ENCODE measurements at regions of chr6 and their contacts with region 1.

Region 1: DNA sequence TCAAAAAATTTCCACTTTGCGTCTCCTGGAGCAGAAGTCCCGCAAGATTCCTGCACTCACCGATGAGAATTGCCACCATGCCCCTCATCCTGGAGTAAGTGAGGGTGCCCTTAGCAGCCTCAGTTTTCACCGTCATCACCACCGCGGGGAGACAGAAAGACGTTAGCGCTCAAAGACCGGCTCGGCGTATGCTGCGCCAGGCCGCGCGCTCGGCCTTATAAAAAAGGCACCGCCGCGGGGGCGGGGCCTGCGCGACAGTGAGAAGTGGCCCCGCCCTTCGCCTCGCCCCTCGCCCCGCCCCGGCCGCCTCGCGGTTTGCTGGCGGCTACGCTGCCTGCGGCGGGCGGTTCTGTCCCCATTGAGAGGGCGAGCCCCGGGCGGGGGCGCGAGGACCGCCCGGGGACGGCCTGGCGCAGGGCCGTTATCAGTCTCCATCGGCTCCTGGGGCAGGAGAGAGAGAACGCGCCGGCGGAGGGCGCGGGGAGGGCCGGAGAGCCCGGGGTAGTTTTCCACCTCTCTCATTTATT is 122.3 kb upstream of the SLC2A12 start:
- DNase-seq: peak; percentile 88 to 97 (median 94)
- ATAC-seq: peak; percentile 77
- H3K4me3 ChIP-seq: peak overlapping the region; percentile 64 to 87
- H3K4me3 Mint-ChIP-seq: peak overlapping the region; percentile 98
- H3K27ac ChIP-seq: peak overlapping the region; percentile 67 to 79
- H3K27ac Mint-ChIP-seq: peak overlapping the region; percentile 94
- H3K4me1 ChIP-seq: peaks cover 63% of the 10 kb centered on the region
- H3K4me1 Mint-ChIP-seq: peaks cover 71% of the 10 kb centered on the region
- H3K27me3 ChIP-seq: no peaks in the 10 kb centered on the region
- H3K27me3 Mint-ChIP-seq: no peaks in the 10 kb centered on the region
- CTCF ChIP-seq: no peak

Region 2: DNA sequence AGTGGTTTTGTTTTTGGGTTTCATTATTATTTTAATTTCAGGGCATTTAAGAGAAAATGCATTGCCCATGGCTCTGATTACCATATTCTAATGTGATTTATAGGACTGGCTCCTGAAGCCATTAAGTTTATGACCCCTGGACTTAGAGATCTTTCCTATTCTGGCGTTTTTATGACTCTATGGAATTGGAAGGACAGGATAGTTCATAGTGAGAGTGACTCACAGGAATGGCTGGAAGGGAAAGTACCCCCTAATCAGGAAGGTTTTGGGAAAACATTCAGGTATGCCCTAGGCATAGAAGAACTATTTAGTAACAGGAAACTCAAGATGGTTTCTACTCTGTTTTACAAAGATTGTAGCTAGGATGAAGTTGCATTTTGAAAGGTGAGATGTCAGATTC is 13.7 kb before region 1 on chr6:
- CTCF ChIA-PET with region 1: interaction called, 11 read pairs
- POLR2A ChIA-PET with region 1: interaction called, 3 read pairs
- intact Hi-C with region 1: no loop called
- DNase-seq: no peak
- ATAC-seq: no peak
- H3K4me3 ChIP-seq: no peak overlapping the region
- H3K4me3 Mint-ChIP-seq: no peak overlapping the region
- H3K27ac ChIP-seq: no peak overlapping the region
- H3K27ac Mint-ChIP-seq: no peak overlapping the region
- H3K4me1 ChIP-seq: no peaks in the 10 kb centered on the region
- H3K4me1 Mint-ChIP-seq: no peaks in the 10 kb centered on the region
- H3K27me3 ChIP-seq: no peaks in the 10 kb centered on the region
- H3K27me3 Mint-ChIP-seq: no peaks in the 10 kb centered on the region
- CTCF ChIP-seq: no peak

Region 3: GRCh38 chr6:134381959-134382358 is 207.2 kb after region 1 on chr6:
- CTCF ChIA-PET with region 1: interaction called, 5 read pairs
- POLR2A ChIA-PET with region 1: no interaction called
- intact Hi-C with region 1: loop called in 1 of 2 experiments (anchors 10 kb)
- DNase-seq: no peak
- ATAC-seq: no peak
- H3K4me3 ChIP-seq: no peak overlapping the region
- H3K4me3 Mint-ChIP-seq: no peak overlapping the region
- H3K27ac ChIP-seq: no peak overlapping the region
- H3K27ac Mint-ChIP-seq: no peak overlapping the region
- H3K4me1 ChIP-seq: peaks cover 19% of the 10 kb centered on the region
- H3K4me1 Mint-ChIP-seq: peaks cover 25% of the 10 kb centered on the region
- H3K27me3 ChIP-seq: no peaks in the 10 kb centered on the region
- H3K27me3 Mint-ChIP-seq: no peaks in the 10 kb centered on the region
- CTCF ChIP-seq: no peak

Region 4: DNA sequence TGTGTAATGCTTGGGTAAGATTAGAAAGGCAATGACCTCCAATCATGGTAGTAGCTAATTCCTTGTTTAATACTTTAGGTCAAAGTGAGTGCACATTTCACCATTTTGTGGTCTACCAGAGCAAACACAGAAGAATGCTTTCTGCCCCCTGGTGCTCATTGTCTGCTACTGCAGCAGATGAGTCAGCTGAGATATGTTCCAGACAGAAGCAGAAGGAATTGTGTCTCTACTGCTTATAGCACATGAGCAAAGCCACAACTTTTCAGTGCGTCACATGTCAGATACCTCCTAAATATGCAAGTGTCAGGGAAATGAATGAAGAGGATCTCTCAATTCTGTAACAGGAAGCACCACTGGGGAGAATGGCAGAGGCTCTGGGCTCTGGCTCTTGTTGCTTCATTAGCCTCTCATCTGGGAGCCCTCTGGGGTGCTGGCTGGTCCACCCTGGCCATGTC is 466.3 kb after region 1 on chr6:
- CTCF ChIA-PET with region 1: interaction called, 75 read pairs
- POLR2A ChIA-PET with region 1: interaction called, 16 read pairs
- intact Hi-C with region 1: loop called (anchors 1 kb)
- DNase-seq: peak; percentile 53 to 86 (median 77)
- ATAC-seq: peak; percentile 97
- H3K4me3 ChIP-seq: no peak overlapping the region
- H3K4me3 Mint-ChIP-seq: no peak overlapping the region
- H3K27ac ChIP-seq: no peak overlapping the region
- H3K27ac Mint-ChIP-seq: no peak overlapping the region
- H3K4me1 ChIP-seq: no peaks in the 10 kb centered on the region
- H3K4me1 Mint-ChIP-seq: peaks cover 10% of the 10 kb centered on the region
- H3K27me3 ChIP-seq: no peaks in the 10 kb centered on the region
- H3K27me3 Mint-ChIP-seq: no peaks in the 10 kb centered on the region
- CTCF ChIP-seq: peak; percentile 89

Region 5: GRCh38 chr6:135002229-135002844 is 827.6 kb after region 1 on chr6:
- CTCF ChIA-PET with region 1: no interaction called
- POLR2A ChIA-PET with region 1: no interaction called
- intact Hi-C with region 1: loop called in 1 of 2 experiments (anchors 10 kb)
- DNase-seq: peak in 2 of 9 experiments; percentile 26 to 42
- ATAC-seq: peak; percentile 36
- H3K4me3 ChIP-seq: no peak overlapping the region
- H3K4me3 Mint-ChIP-seq: no peak overlapping the region
- H3K27ac ChIP-seq: no peak overlapping the region
- H3K27ac Mint-ChIP-seq: no peak overlapping the region
- H3K4me1 ChIP-seq: peaks cover 14% of the 10 kb centered on the region
- H3K4me1 Mint-ChIP-seq: peaks cover 18% of the 10 kb centered on the region
- H3K27me3 ChIP-seq: no peaks in the 10 kb centered on the region
- H3K27me3 Mint-ChIP-seq: no peaks in the 10 kb centered on the region
- CTCF ChIP-seq: peak; percentile 71

Region 6: DNA sequence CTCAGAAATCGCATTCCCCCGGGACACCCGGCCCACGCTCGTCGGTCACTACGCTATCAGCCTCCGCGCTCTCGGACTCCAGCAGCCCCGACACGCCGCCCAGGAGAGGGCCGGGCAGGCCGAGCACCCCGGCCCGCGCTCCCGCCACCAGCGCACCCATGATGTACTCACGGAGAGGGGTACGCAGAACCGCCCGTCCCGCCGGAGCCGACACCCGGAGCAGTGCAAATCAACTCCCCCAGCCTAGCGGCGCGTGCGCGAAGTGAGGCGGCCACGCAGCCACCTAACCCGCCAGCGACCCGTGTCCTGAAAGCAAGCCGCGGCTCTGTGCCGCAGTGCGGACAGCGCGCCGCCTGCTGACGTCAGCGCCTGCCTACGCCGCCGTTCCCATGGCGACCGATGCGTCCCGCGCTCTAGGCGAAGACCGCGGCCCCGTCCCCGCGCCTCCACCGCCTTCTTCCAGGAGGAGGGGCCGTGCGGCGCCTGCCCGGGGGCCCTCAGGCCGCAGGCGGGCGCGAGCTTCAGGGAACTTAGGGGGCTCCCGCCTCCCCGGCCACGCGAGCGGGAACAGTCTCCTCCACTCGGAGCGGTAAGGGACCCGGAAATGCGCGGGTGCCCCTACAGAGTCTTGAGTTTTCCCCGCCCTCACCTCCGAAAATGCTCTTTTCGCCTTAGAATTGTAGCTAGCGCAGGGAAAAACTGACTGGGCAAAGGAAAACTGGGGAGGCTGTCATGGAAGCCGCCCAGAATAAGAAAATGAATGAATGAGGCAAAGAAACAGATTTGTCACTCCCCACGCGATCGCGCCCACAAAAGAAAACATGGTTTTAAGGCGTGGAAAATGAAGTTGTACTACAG is 1322.9 kb after region 1 on chr6 and contains the start of gene AHI1:
- CTCF ChIA-PET with region 1: no interaction called
- POLR2A ChIA-PET with region 1: no interaction called
- intact Hi-C with region 1: loop called in 1 of 2 experiments (anchors 1 kb)
- DNase-seq: peak; percentile 81 to 95 (median 86)
- ATAC-seq: peak; percentile 72
- H3K4me3 ChIP-seq: peak within 1 kb of the TSS; percentile 87 to 95
- H3K4me3 Mint-ChIP-seq: no peak within 1 kb of the TSS
- H3K27ac ChIP-seq: peak within 1 kb of the TSS; percentile 91 to 98
- H3K27ac Mint-ChIP-seq: no peak within 1 kb of the TSS
- H3K4me1 ChIP-seq: peaks cover 6% of the 10 kb centered on the region
- H3K4me1 Mint-ChIP-seq: peaks cover 8% of the 10 kb centered on the region
- H3K27me3 ChIP-seq: no peaks in the 10 kb centered on the region
- H3K27me3 Mint-ChIP-seq: no peaks in the 10 kb centered on the region
- CTCF ChIP-seq: no peak
- total RNA-seq, gene AHI1: 16.0 to 17.9 TPM

Measured in CD8-positive, alpha-beta T cell (primary cell).